ENCODE measurements at regions of chr1 and their contacts with region 1.

Region 1: GRCh38 chr1:157878059-157878458 is 36.5 kb upstream of the CD5L start:
- DNase-seq: no peak
- ATAC-seq: peak; percentile 54
- H3K4me3 Mint-ChIP-seq: no peak overlapping the region
- H3K27ac Mint-ChIP-seq: no peak overlapping the region
- H3K4me1 Mint-ChIP-seq: peaks cover 19% of the 10 kb centered on the region
- H3K27me3 Mint-ChIP-seq: no peaks in the 10 kb centered on the region
- CTCF ChIP-seq: no peak

Region 2: GRCh38 chr1:157849229-157849875 is 28.7 kb before region 1 on chr1:
- CTCF ChIA-PET with region 1: no interaction called
- POLR2A ChIA-PET with region 1: no interaction called
- intact Hi-C with region 1: no loop called
- DNase-seq: no peak
- ATAC-seq: peak; percentile 87
- H3K4me3 Mint-ChIP-seq: peak overlapping the region; percentile 81
- H3K27ac Mint-ChIP-seq: peak overlapping the region; percentile 94
- H3K4me1 Mint-ChIP-seq: peaks cover 64% of the 10 kb centered on the region
- H3K27me3 Mint-ChIP-seq: no peaks in the 10 kb centered on the region
- CTCF ChIP-seq: no peak

Region 3: DNA sequence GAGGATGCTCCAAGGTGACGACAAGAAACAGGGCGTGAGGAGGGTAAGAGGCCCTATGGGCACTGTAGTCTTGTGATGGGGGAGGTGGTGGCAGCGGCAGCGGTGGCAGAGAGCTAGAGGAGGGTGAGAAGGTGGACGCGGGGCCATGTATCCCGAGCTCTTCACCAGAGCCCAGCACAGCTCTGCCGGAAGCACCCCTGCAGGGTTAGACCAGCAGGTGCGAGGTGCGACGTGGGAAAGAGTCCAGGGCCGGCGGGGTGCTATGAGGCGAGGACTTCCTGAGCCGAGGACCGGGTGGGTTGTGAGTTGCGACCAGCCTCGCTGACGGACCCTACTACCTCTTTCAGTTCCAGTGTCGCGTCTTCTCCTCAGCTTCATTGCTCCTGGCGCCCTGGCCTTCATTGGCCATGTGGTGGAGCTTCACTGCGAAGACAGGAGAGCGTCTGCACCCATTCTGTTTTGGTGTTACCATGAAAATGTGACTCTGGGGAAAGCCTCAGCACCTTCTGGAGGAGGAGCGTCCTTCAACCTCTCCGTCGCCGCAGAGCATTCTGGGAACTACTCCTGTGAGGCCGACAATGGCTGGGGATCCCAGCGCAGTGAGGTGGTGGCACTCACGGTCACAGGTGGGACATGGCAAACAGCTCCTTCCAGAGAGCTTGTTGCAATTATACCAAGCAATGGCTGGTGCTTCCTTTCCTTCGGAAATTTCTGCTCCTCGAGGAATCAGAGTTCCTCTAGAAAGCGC is 47.5 kb after region 1 on chr1:
- CTCF ChIA-PET with region 1: no interaction called
- POLR2A ChIA-PET with region 1: no interaction called
- intact Hi-C with region 1: no loop called
- DNase-seq: no peak
- ATAC-seq: no peak
- H3K4me3 Mint-ChIP-seq: no peak overlapping the region
- H3K27ac Mint-ChIP-seq: no peak overlapping the region
- H3K4me1 Mint-ChIP-seq: peaks cover 8% of the 10 kb centered on the region
- H3K27me3 Mint-ChIP-seq: no peaks in the 10 kb centered on the region
- CTCF ChIP-seq: no peak

Region 4: DNA sequence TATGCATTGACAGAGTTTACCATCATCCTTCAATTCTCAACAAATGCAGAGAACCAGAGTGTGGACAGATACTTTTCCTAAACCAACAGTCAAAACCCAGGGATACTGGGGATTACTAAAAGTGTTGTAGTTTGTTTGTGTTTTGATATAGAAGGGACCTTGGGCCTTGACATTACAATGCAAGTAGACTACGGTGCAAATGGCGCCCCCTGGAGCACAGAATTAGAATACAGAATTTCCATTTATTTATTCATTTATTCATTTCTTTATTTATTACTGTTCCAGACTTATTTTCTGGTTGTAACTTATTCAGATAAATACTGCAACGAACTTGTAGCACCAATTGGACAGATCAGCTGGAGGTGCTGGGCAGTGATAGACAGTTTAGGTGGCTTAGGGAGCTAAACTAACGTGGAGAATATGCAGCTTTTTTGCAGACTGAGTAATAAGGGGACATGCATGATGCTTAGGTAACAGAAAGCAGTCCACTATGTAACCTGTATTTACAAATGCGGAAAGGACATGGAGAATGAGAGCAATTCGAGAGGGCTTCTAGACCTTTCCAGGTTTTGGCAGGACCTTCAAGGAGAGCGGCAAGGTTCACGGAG is 158.0 kb after region 1 on chr1:
- CTCF ChIA-PET with region 1: interaction called, 3 read pairs
- POLR2A ChIA-PET with region 1: no interaction called
- intact Hi-C with region 1: loop called (anchors 1 kb)
- DNase-seq: no peak
- ATAC-seq: no peak
- H3K4me3 Mint-ChIP-seq: no peak overlapping the region
- H3K27ac Mint-ChIP-seq: no peak overlapping the region
- H3K4me1 Mint-ChIP-seq: no peaks in the 10 kb centered on the region
- H3K27me3 Mint-ChIP-seq: peaks cover 20% of the 10 kb centered on the region
- CTCF ChIP-seq: no peak

Region 5: GRCh38 chr1:158087320-158087927 is 209.4 kb after region 1 on chr1:
- CTCF ChIA-PET with region 1: no interaction called
- POLR2A ChIA-PET with region 1: no interaction called
- intact Hi-C with region 1: loop called (anchors 2 kb)
- DNase-seq: no peak
- ATAC-seq: peak; percentile 70
- H3K4me3 Mint-ChIP-seq: no peak overlapping the region
- H3K27ac Mint-ChIP-seq: no peak overlapping the region
- H3K4me1 Mint-ChIP-seq: no peaks in the 10 kb centered on the region
- H3K27me3 Mint-ChIP-seq: peaks cover 8% of the 10 kb centered on the region
- CTCF ChIP-seq: no peak

Measured in activated B cell treated with CpG ODN at 0.5 μM for 24 hours (primary cell).